ENCODE measurements at regions of chr14 and their contacts with region 1.

Region 1: GRCh38 chr14:22852940-22853767 is 16.8 kb downstream of the MMP14 start:
- DNase-seq: peak; percentile 87
- CTCF ChIP-seq: peak; percentile 86

Region 2: DNA sequence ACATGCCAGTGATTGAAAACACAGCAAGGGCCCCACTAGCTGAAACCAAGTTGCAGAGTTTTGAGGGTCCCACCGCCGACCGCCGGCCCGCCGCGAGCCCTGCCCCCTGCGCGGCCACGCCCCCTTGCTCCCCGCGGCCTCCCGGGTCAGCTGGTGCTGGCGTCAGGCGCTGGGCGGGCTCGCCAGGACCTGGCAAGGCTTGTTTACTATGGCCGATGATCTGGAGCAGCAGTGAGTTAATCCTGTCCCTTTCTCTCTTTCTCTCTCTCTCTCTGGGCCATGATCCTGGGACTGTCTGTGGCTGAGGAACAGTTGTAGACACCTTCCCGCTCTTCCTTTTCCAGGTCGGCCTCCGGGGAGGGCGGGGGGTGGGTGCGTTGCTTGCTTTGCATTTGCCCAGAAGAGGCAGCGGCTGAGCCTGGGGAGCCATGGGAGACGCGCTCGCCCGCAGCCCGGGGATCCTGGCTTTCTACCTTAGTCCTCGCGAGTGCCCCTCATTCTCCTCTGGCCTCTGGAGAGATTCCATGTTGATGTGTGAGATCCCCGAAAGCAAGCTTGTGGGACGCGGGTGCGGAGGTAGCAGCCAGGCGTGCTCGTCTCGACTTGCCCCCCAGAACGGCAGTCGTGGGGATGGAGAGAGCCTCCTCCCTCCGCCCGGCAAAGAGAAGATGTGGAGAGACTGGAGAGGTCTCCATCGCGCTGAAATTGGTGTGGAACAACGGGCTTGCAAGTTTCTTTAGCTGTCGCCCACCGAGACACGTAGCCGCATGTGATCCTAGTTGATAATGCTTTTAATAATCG is 254.9 kb before region 1 on chr14 and contains the start of gene ABHD4:
- CTCF ChIA-PET with region 1: interaction called, 12 read pairs
- POLR2A ChIA-PET with region 1: no interaction called
- DNase-seq: peak; percentile 87
- CTCF ChIP-seq: no peak

Region 3: DNA sequence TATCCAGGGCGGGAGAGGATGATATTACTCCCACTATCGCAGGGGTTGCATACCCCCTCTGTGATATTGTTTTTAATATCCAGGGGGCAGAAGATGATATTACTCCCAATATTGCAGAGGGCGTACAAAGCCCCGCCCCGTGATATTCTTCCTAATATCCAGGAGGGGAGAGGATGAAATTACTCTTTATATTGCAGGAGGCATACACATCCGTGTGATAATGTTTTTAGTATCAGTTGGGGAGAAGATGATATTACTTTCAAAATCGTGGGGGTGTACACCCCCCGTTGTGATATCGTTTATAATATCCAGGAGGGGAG is 139.6 kb before region 1 on chr14:
- CTCF ChIA-PET with region 1: no interaction called
- POLR2A ChIA-PET with region 1: no interaction called
- DNase-seq: no peak
- CTCF ChIP-seq: no peak

Region 4: GRCh38 chr14:22766456-22767322 is 86.5 kb before region 1 on chr14 and contains the start of gene OXA1L:
- CTCF ChIA-PET with region 1: interaction called, 11 read pairs
- POLR2A ChIA-PET with region 1: no interaction called
- DNase-seq: peak; percentile 91
- CTCF ChIP-seq: no peak

Region 5: DNA sequence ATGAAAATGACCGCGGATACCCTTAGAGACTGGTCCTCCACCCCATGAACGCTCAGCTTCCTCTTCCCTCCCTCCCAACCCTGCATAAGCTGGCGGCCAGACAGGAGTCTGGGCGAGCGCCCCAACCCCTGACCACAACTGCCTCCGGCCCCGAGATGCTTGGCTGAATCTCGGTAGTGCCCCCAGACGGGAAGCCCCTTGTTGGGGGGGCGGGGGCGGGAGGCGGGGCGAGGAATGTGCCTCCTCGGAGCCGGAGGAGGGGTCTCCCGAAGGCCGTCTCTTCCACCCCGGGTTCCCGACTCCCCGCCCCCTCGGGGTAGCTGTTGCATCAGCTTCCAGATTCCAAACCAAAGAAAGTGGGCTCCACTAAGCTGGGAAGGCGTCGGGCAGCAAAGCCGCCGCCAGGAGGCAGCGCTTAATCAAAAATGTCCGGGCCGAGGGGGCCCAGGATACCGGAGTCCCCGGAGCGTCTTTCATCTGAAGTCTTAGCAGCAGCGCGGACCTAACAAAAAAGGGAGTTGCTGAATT is 30.5 kb before region 1 on chr14:
- CTCF ChIA-PET with region 1: interaction called, 262 read pairs
- POLR2A ChIA-PET with region 1: no interaction called
- DNase-seq: peak; percentile 74
- CTCF ChIP-seq: peak; percentile 89

Region 6: DNA sequence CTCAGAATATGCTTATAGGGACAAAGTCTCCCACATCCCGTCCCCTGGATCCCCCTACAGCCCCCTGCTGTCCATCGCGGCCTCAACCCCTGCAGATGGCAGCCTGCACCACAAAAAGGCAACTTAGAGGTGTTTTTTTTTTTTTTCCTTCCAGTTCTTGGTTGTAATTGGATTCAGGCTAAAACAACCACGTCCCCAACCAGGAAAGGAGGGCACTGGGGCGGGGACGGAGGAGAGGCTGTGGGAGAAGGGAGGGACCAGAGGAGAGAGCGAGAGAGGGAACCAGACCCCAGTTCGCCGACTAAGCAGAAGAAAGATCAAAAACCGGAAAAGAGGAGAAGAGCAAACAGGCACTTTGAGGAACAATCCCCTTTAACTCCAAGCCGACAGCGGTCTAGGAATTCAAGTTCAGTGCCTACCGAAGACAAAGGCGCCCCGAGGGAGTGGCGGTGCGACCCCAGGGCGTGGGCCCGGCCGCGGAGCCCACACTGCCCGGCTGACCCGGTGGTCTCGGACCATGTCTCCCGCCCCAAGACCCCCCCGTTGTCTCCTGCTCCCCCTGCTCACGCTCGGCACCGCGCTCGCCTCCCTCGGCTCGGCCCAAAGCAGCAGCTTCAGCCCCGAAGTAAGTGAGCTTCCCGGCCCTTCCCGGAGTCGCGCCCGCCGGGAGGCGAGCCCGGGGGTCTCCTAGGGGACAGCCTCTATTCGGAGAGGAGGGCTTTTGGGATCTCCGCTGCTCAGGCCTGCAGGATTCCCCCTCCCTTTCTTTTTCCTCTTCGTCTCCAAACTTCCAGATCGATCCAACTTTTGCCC is 16.6 kb before region 1 on chr14 and contains the start of gene MMP14:
- CTCF ChIA-PET with region 1: interaction called, 89 read pairs
- POLR2A ChIA-PET with region 1: no interaction called
- DNase-seq: no peak
- CTCF ChIP-seq: no peak

Region 7: GRCh38 chr14:22872033-22872832 is 19.1 kb after region 1 on chr14:
- CTCF ChIA-PET with region 1: interaction called, 76 read pairs
- POLR2A ChIA-PET with region 1: no interaction called
- DNase-seq: peak; percentile 80
- CTCF ChIP-seq: peak; percentile 94

Region 8: GRCh38 chr14:22900081-22900799 is 47.1 kb after region 1 on chr14:
- CTCF ChIA-PET with region 1: interaction called, 42 read pairs
- POLR2A ChIA-PET with region 1: no interaction called
- DNase-seq: peak; percentile 70
- CTCF ChIP-seq: peak; percentile 59

Region 9: GRCh38 chr14:22923749-22924148 is 70.6 kb after region 1 on chr14:
- CTCF ChIA-PET with region 1: no interaction called
- POLR2A ChIA-PET with region 1: no interaction called
- DNase-seq: no peak
- CTCF ChIP-seq: no peak

Region 10: DNA sequence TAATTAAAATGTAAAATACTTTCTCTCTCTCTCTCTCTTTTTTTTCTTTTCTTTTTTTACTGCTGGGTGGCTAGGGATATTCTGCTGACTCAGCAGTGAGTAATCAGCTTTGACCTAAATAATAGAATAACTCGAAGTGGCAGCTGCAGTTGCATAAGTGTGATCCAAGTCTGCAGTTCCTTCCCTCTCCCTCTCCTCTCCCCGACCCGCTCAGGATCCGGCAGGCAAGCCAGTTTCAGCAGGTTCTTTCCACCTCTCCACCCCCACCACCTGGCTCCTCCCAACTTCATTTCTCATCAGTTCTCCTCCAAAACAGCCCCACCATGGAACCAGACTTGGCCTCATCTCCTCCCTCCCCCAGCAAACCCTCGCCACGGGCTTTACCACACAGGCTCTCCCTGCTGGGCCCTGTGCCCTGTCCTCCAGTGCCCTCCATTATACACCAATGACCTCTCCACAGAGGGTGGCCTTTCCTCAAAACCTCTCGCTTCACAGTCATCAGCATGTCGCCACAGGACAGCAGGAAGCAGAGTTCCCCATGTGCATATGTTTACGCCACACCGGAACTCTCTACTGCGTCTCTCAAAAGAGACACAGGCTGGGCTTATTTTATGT is 307.9 kb after region 1 on chr14:
- CTCF ChIA-PET with region 1: no interaction called
- POLR2A ChIA-PET with region 1: no interaction called
- DNase-seq: no peak
- CTCF ChIP-seq: no peak

Measured in GM10248 (cell line).